ENCODE measurements at regions of chr22 and their contacts with region 1.

Region 1: DNA sequence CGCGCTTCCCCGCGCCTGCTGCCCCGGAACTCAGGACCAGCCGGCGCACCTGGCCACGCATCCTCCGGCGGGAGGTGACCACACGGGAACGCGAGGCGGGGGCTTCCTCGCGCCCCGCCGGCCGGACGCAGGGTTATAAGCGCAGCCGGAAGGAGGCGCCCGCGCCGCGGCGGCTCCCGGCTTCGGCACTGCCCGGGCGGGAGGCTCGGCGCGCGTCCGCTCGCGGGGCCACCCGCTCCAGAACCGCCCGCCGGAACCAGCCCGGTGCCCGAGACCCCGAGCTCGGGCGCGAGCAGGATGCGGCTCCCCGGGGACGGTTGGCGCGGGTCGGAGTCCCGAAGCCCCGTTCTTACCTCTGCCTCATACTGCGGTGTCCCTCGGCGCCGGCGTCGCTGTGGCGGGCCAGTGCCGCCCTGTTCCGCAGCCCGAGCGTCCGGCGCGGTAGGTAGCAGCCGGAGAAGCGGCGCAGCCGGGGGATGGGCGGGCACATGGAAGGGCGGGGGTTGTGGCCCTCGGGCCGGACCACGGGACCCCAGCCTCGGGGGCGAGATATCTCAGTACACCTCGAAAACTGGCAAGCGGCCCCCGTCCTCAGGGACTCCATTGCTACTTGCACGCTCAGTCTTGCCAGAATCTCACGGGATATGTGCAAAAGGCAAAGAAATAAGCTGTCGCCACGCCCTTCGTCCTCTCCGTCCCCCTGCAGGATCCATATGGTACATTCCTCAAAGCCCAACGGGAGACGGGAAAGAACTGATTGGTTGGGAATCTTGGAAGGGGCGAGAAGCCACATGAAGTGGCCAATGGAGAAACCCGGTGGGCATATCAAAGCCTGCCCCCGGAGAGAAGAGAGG is 23.1 kb downstream of the MICAL3 start:
- DNase-seq: peak; percentile 85
- ATAC-seq: peak; percentile 82
- H3K4me3 Mint-ChIP-seq: peak overlapping the region; percentile 85
- H3K27ac Mint-ChIP-seq: peak overlapping the region; percentile 94
- H3K4me1 Mint-ChIP-seq: peaks cover 42% of the 10 kb centered on the region
- H3K27me3 Mint-ChIP-seq: peaks cover 9% of the 10 kb centered on the region
- CTCF ChIP-seq: peak; percentile 74

Region 2: GRCh38 chr22:17830043-17830961 is 171.0 kb before region 1 on chr22:
- CTCF ChIA-PET with region 1: interaction called, 11 read pairs
- POLR2A ChIA-PET with region 1: no interaction called
- intact Hi-C with region 1: no loop called
- DNase-seq: peak; percentile 88
- ATAC-seq: peak; percentile 99
- H3K4me3 Mint-ChIP-seq: no peak overlapping the region
- H3K27ac Mint-ChIP-seq: no peak overlapping the region
- H3K4me1 Mint-ChIP-seq: peaks cover 4% of the 10 kb centered on the region
- H3K27me3 Mint-ChIP-seq: no peaks in the 10 kb centered on the region
- CTCF ChIP-seq: peak; percentile 99

Region 3: DNA sequence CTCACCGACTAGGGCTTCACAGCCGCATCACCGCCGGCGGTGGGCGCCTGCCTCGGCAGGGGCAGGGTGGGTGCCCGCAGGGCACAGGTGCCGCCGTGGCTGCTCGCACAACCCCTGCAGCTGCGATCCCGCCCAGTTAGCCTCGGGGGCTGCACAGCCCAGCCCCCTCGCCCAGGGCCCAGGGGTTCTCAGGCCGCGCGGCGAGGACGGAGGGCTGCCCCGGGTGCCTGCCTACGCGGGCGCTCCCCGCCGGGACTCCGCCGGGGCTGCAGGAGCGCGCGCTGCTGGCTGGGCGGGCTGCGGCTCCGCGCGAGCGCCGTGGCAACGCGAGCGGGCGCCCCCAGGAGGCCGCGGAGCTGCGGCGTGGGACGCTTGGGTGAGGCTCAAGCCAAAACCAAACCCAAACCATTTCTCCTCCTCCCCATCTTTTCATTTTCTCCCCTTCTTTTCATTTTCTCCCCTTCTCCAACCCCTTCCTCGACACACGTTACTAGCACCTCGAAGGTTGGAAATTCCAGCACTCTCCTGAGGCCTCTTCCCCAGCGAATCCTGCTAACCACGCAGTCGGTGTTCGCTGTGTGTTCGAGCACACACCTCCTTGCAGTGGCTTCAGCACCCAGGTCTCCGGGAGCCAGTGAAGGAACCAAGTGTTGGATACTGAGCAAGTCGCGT is 23.1 kb after region 1 on chr22 and contains the start of gene MICAL3:
- CTCF ChIA-PET with region 1: interaction called, 14 read pairs
- POLR2A ChIA-PET with region 1: interaction called, 3 read pairs
- intact Hi-C with region 1: no loop called
- DNase-seq: peak; percentile 68
- ATAC-seq: peak; percentile 97
- H3K4me3 Mint-ChIP-seq: peak within 1 kb of the TSS; percentile 69
- H3K27ac Mint-ChIP-seq: no peak within 1 kb of the TSS
- H3K4me1 Mint-ChIP-seq: peaks cover 6% of the 10 kb centered on the region
- H3K27me3 Mint-ChIP-seq: peaks cover 39% of the 10 kb centered on the region
- CTCF ChIP-seq: peak; percentile 51
- total RNA-seq, gene MICAL3: 31.6 to 32.4 TPM

Measured in activated CD8-positive, alpha-beta T cell treated with anti-CD3 and anti-CD28 coated beads for 36 hours (primary cell).